Dendritic cell treated with granulocyte-macrophage colony-stimulating factor and Interleukin-4, amounts not matched to agents 40 ng/mL and 50 ng/mL, for 4 days (primary cell): ENCODE measurements at regions of chr7 and their contacts with region 1.

Region 1: GRCh38 chr7:44082541-44083207 is 344 bp upstream of the POLM start:
- H3K4me3 Mint-ChIP-seq: peak overlapping the region; percentile 84
- H3K27ac Mint-ChIP-seq: peak overlapping the region; percentile 90
- H3K4me1 Mint-ChIP-seq: peaks cover 30% of the 10 kb centered on the region
- H3K27me3 Mint-ChIP-seq: peaks cover 3% of the 10 kb centered on the region

Region 2: DNA sequence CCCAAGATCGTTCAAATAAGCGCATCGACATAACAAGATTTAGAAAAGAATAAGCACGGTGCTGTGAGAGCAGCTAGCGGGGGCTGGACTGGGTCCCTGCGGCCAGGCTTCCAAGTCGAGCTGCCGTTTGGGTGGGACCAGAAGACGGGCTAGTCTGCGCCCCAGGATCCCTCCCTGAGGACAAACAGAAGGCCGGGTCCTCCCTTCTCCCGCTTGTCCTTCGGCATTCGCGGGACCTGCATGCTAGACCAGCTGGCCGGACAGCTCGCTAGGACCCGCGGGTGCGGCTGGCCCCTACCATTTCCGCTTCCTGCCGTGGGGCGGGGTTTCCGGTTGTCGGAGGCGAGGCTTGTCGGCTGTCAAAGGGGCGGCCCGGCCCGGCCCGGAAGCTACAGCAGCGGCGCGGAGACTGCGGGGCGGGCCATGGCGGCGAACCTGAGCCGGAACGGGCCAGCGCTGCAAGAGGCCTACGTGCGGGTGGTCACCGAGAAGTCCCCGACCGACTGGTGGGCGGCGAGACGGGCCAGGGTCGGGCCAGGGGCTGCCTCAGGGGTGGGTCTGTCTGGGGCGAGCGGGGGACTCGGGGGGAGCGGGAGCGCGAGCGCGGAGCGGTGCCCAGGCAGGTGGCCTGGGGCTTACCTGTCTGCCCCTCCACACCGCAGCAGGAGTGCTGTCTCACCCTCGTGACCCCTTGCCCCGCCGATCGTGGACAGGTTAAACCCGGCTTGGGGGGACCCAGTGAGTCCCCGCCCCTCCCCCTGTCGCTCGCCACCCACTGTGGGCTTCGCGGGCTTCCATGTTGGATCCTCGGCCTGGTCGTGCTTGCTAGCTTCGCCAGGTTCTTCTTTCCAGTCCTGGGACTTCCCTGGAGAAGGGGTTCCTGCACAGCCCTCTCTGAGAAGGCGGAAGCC is 38.1 kb before region 1 on chr7 and contains the start of gene DBNL:
- intact Hi-C with region 1: loop called (anchors 5 kb)
- H3K4me3 Mint-ChIP-seq: peak within 1 kb of the TSS; percentile 86
- H3K27ac Mint-ChIP-seq: peak within 1 kb of the TSS; percentile 93
- H3K4me1 Mint-ChIP-seq: peaks cover 55% of the 10 kb centered on the region
- H3K27me3 Mint-ChIP-seq: no peaks in the 10 kb centered on the region

Region 3: GRCh38 chr7:44072364-44073231 is 10.1 kb before region 1 on chr7:
- intact Hi-C with region 1: loop called (anchors 1 kb)
- H3K4me3 Mint-ChIP-seq: no peak overlapping the region
- H3K27ac Mint-ChIP-seq: peak overlapping the region; percentile 93
- H3K4me1 Mint-ChIP-seq: peaks cover 67% of the 10 kb centered on the region
- H3K27me3 Mint-ChIP-seq: no peaks in the 10 kb centered on the region

Region 4: GRCh38 chr7:44123190-44124003 is 40.7 kb after region 1 on chr7 and contains the start of gene POLD2:
- intact Hi-C with region 1: loop called (anchors 1 kb)
- H3K4me3 Mint-ChIP-seq: peak within 1 kb of the TSS; percentile 73
- H3K27ac Mint-ChIP-seq: peak within 1 kb of the TSS; percentile 77
- H3K4me1 Mint-ChIP-seq: peaks cover 39% of the 10 kb centered on the region
- H3K27me3 Mint-ChIP-seq: peaks cover 3% of the 10 kb centered on the region

Region 5: DNA sequence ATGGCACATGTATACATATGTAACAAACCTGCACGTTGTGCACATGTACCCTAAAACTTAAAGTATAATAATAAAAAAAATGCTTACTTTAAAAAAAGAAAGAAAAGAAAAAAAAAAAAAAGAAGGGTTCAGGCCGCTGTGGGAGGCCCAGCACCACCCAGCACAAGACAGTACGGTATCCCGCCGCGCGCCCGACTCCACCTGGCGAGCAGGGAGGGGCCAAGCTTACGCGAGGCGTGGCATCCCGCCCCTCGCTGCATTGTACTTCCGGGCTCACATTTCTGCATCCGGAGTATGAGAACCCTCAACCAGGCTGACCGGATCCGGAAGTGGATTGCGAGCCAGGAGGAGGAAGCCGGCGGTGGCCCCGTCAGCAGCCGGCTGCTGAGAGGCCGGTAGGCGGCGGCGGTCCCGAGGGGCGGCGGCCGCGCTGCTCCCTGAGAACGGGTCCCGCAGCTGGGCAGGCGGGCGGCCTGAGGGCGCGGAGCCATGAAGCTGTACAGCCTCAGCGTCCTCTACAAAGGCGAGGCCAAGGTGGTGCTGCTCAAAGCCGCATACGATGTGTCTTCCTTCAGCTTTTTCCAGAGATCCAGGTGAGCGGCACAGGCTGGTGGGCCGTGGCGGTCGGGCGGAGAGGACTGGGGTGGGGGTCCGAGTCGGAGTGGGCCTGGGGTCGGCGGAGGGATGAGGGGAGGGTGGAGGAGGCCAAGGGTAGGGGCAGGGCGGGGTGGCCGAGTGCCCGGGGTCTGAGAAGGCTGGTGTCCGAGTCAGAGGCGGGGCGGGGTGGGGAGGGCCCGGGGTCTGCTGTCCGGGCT is 118.2 kb after region 1 on chr7 and contains the start of gene YKT6:
- intact Hi-C with region 1: loop called (anchors 1 kb)
- H3K4me3 Mint-ChIP-seq: peak within 1 kb of the TSS; percentile 87
- H3K27ac Mint-ChIP-seq: peak within 1 kb of the TSS; percentile 91
- H3K4me1 Mint-ChIP-seq: peaks cover 28% of the 10 kb centered on the region
- H3K27me3 Mint-ChIP-seq: peaks cover 10% of the 10 kb centered on the region